ENCODE measurements at regions of chr17 and their contacts with region 1.

Region 1: DNA sequence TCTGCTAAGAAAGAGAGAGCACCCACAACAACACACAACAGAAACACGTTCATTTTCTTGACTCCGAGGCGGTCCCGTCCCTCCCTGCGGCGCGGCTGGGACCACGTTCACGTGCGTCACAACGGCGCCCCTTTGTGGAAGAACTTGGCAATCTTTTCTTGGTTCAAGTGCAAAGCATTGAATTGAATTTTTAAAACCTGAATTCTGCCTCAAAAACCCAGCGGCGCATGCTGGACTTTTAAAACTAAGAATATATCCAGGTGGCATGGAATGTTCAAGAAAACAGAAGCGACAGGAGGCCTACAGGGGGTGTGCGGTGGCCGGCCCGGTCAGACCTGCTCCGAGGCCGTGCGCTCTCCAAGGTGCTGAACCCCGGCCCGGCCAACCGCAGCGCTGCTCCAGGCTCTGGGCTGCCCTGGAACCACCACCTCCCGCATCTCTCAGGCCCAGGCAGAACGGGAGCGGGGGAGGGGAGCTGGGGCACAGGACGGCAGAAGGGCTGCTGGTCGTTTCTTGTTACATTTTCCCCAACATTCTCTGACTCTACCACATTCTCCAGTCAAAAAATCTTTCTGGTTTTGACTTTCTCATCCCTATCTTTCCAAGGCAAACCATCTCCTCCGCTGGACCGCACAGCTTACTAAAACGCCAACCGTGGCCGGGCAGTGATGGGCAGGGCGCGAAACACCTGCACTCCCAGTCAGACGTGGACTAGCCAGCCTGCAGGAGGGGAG is 3.4 kb upstream of the HEXD start:
- DNase-seq: peak; percentile 62
- H3K4me3 Mint-ChIP-seq: no peak overlapping the region
- H3K27ac Mint-ChIP-seq: no peak overlapping the region
- H3K4me1 Mint-ChIP-seq: no peaks in the 10 kb centered on the region
- H3K27me3 Mint-ChIP-seq: no peaks in the 10 kb centered on the region
- CTCF ChIP-seq: peak; percentile 26

Region 2: GRCh38 chr17:82205719-82206508 is 208.8 kb before region 1 on chr17:
- CTCF ChIA-PET with region 1: no interaction called
- intact Hi-C with region 1: no loop called
- DNase-seq: peak; percentile 85
- H3K4me3 Mint-ChIP-seq: peak overlapping the region; percentile 45
- H3K27ac Mint-ChIP-seq: peak overlapping the region; percentile 89
- H3K4me1 Mint-ChIP-seq: peaks cover 31% of the 10 kb centered on the region
- H3K27me3 Mint-ChIP-seq: no peaks in the 10 kb centered on the region
- CTCF ChIP-seq: peak; percentile 88

Region 3: GRCh38 chr17:82351716-82352488 is 62.8 kb before region 1 on chr17:
- CTCF ChIA-PET with region 1: interaction called, 11 read pairs
- intact Hi-C with region 1: loop called (anchors 5 kb)
- DNase-seq: peak; percentile 88
- H3K4me3 Mint-ChIP-seq: no peak overlapping the region
- H3K27ac Mint-ChIP-seq: no peak overlapping the region
- H3K4me1 Mint-ChIP-seq: no peaks in the 10 kb centered on the region
- H3K27me3 Mint-ChIP-seq: peaks cover 18% of the 10 kb centered on the region
- CTCF ChIP-seq: peak; percentile 94

Region 4: DNA sequence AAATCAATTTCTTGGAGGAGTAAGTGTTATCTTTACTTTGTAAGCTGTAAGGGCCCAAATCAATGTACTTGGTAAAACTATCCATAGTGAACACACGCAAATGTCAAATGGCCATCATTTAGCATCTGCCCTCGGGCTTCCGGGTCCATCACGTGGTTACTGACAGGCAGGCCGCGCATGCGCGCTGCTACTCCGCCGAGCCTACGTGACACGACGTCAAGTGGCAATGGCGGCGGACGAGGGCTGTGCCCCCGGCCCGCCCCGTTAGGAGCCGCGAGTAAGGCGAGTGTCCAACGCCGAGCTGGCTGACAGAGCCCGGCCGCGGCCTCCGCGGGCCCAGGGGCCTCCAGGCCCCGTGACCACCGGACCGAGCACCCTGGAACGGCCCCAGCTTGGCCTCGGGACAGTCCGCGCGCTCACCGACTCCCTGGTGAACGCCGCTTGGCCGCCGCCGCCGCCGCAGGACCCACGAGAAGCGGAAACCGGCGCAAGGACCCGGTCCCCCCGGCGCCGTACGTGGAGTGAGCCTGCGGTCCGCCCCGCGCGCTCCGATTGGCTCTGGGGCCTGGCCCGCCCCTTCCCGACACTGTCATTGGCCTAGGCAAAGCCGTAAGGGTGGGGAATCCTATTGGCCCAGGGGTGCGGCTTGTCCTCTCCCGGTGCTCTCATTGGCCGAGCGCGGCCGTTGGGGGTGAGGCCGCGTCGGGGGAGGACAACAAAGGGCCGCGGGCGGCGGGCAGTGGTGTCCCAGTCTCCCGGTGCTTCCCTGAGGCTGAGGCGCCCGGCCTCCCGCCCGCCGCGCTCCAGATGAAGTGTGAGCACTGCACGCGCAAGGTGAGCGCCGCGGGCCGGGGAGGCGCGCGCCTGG is 43.5 kb after region 1 on chr17 and contains the start of gene NARF:
- CTCF ChIA-PET with region 1: no interaction called
- intact Hi-C with region 1: no loop called
- DNase-seq: peak; percentile 98
- H3K4me3 Mint-ChIP-seq: peak within 1 kb of the TSS; percentile 87
- H3K27ac Mint-ChIP-seq: peak within 1 kb of the TSS; percentile 78
- H3K4me1 Mint-ChIP-seq: peaks cover 31% of the 10 kb centered on the region
- H3K27me3 Mint-ChIP-seq: no peaks in the 10 kb centered on the region
- CTCF ChIP-seq: no peak
- total RNA-seq, gene NARF: 38.1 and 39.4 TPM in 2 replicates

Measured in Calu3 (cell line).